Activated CD4-positive, alpha-beta memory T cell treated with anti-CD3 and anti-CD28 coated beads for 36 hours (primary cell): ENCODE measurements at regions of chr17 and their contacts with region 1.

Region 1: GRCh38 chr17:76557368-76558197 is 17.7 kb downstream of the PRCD start:
- DNase-seq: peak; percentile 96
- H3K4me3 Mint-ChIP-seq: peak overlapping the region; percentile 97
- H3K27ac Mint-ChIP-seq: peak overlapping the region; percentile 99
- H3K4me1 Mint-ChIP-seq: peaks cover 48% of the 10 kb centered on the region
- H3K27me3 Mint-ChIP-seq: no peaks in the 10 kb centered on the region

Region 2: GRCh38 chr17:76547184-76547641 is 10.4 kb before region 1 on chr17:
- CTCF ChIA-PET with region 1: interaction called, 13 read pairs
- POLR2A ChIA-PET with region 1: interaction called, 3 read pairs
- intact Hi-C with region 1: no loop called
- DNase-seq: peak; percentile 48
- H3K4me3 Mint-ChIP-seq: no peak overlapping the region
- H3K27ac Mint-ChIP-seq: no peak overlapping the region
- H3K4me1 Mint-ChIP-seq: no peaks in the 10 kb centered on the region
- H3K27me3 Mint-ChIP-seq: peaks cover 11% of the 10 kb centered on the region

Region 3: GRCh38 chr17:76567634-76568432 is 10.2 kb after region 1 on chr17:
- CTCF ChIA-PET with region 1: interaction called, 15 read pairs
- POLR2A ChIA-PET with region 1: interaction called, 18 read pairs
- intact Hi-C with region 1: no loop called
- DNase-seq: no peak
- H3K4me3 Mint-ChIP-seq: no peak overlapping the region
- H3K27ac Mint-ChIP-seq: no peak overlapping the region
- H3K4me1 Mint-ChIP-seq: peaks cover 29% of the 10 kb centered on the region
- H3K27me3 Mint-ChIP-seq: no peaks in the 10 kb centered on the region

Region 4: DNA sequence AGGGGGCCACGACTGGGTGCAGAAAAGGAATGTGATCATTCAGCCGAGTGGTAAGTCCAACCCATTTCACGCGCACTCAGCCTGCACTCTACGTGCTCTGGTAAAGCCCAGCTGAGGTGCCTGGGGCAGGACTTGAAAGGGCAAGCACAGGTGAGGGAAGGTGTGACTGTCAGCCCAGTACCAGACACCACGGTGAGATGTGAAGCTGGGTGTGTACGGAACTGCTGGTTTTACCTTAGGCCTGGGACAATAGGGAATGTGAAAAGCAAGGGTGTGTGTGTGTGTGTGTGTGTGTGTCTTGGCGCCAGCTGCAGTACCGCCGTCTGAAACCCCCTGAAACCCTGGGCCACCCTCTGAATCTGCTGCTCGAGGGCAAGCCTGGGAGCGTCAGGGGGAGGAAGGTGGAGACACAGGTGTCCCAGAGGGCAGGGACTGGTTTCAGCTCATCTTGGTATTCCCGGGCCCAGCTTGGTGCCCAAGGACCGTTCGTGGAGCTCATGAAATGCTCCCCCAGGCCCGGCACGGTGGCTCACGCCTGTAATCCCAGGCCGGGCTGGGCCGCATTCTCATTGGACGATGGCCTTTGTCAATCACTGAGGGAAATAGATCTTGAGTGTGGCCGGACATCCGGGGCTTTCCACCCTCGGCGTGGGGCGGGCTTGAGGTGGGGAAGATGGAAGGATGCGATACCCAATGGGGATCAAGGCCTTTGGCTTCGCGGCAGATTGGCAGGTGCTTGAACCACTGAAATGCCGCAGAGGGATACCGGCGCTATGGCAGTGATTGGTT is 113.7 kb after region 1 on chr17:
- CTCF ChIA-PET with region 1: interaction called, 3 read pairs
- POLR2A ChIA-PET with region 1: interaction called, 11 read pairs
- intact Hi-C with region 1: no loop called
- DNase-seq: peak; percentile 100
- H3K4me3 Mint-ChIP-seq: peak overlapping the region; percentile 90
- H3K27ac Mint-ChIP-seq: peak overlapping the region; percentile 93
- H3K4me1 Mint-ChIP-seq: peaks cover 24% of the 10 kb centered on the region
- H3K27me3 Mint-ChIP-seq: no peaks in the 10 kb centered on the region

Region 5: DNA sequence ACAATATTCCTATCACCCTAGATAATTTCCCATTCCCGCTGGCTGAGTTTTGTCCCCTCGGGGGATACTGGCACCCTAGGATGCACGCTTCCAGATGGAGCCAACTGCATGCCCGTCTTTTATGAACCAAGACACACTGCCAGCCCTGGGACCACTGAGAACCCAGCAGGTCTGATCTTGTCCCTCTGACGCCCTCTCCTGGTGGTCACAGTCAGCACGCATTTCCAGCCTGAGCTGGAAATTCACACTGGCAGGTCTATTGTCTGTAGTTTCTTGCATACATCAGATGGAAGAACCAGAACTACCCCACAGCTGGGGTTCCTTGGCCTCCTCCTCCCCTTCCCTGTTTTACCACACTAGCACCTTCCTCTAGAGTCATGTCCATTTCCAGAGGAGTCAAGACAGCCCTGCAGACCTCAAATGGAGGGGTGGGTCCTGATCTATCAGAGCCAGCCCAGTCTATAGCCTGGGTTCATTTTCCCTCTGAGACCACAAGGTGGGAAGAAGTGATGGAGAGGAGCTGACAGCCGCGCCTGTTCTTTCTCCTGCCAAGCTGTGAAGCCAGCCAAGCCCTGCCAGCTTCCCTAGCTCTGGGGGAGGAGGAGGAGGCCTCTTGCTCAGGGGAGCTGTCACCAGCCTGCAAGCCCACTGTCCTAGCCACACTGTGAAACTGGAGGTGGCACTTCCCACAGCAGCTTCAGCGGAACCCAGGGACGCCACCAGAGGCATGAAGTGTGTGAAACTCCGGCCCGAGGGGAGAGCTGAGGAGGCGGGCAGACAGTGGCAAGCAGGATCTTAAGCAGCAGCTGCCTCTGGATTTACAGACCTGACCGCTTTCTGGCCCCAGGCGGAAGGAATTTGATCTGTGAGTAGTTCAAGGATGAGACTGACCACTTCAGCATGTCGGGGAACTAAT is 123.9 kb after region 1 on chr17:
- CTCF ChIA-PET with region 1: interaction called, 23 read pairs
- POLR2A ChIA-PET with region 1: interaction called, 3 read pairs
- intact Hi-C with region 1: no loop called
- DNase-seq: peak; percentile 80
- H3K4me3 Mint-ChIP-seq: no peak overlapping the region
- H3K27ac Mint-ChIP-seq: no peak overlapping the region
- H3K4me1 Mint-ChIP-seq: peaks cover 3% of the 10 kb centered on the region
- H3K27me3 Mint-ChIP-seq: no peaks in the 10 kb centered on the region